Endothelial cell of umbilical vein (primary cell): ENCODE measurements at regions of chr20 and their contacts with region 1.

Region 1: DNA sequence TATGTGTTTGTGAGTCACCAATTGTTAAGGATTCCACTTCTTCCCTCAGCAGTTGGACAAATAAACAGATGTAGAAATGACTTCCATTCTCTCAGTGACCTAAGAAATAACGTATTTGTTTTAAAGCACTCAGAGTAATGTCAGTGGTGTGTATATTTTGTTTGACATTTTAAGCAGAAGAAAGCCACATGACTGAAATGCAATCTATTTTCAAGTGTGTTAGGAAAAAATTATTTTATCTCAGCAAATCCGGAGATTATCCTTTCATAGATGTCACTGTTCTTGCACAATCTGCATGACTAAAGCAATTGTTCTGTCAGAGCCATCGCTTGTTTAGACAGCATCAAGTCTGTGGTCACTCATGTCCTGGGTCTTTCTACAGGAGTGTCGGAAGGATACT is 77.1 kb downstream of the JAG1 start:
- DNase-seq: peak; percentile 55
- H3K4me3 ChIP-seq: no peak overlapping the region
- H3K27ac ChIP-seq: peak overlapping the region; percentile 25
- H3K4me1 ChIP-seq: peaks cover 35% of the 10 kb centered on the region
- H3K27me3 ChIP-seq: no peaks in the 10 kb centered on the region
- CTCF ChIP-seq: no peak
- POLR2A ChIP-seq: no peak

Region 2: DNA sequence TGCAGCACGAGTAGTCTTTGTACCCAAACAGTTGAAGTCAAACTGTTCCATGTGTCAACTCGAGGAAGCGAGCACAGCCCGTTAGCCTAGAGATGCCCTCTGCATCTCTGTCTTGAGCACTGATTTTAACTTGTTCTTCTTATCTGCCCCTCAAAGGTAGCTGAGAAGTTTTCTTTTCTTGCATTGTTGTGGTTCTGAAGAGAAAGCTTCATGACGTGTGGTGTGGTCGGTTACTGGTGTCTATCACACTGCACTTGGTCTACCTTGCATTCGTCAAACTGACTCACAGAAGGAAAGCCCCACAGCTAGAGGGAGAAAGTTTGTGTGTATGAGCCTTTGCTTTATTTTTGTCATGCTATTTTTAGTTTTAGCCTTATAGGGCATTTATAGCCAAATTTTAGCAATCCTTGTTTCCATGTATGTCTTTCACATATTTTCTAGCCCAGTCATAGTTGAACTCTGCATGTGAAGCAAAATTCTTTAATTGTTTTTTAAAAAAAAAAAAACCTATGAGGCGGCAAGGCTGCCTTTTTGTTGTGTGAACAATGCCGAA is 38.0 kb before region 1 on chr20:
- CTCF ChIA-PET with region 1: interaction called, 3 read pairs
- POLR2A ChIA-PET with region 1: interaction called, 5 read pairs
- dilution Hi-C with region 1: no loop called
- intact Hi-C with region 1: loop called (anchors 5 kb)
- DNase-seq: no peak
- H3K4me3 ChIP-seq: no peak overlapping the region
- H3K27ac ChIP-seq: no peak overlapping the region
- H3K4me1 ChIP-seq: peaks cover 19% of the 10 kb centered on the region
- H3K27me3 ChIP-seq: no peaks in the 10 kb centered on the region
- CTCF ChIP-seq: no peak
- POLR2A ChIP-seq: no peak

Region 3: GRCh38 chr20:10576411-10577090 is 20.2 kb before region 1 on chr20:
- CTCF ChIA-PET with region 1: interaction called, 11 read pairs
- POLR2A ChIA-PET with region 1: no interaction called
- dilution Hi-C with region 1: no loop called
- intact Hi-C with region 1: loop called (anchors 2 kb)
- DNase-seq: peak; percentile 55
- H3K4me3 ChIP-seq: no peak overlapping the region
- H3K27ac ChIP-seq: no peak overlapping the region
- H3K4me1 ChIP-seq: peaks cover 17% of the 10 kb centered on the region
- H3K27me3 ChIP-seq: no peaks in the 10 kb centered on the region
- CTCF ChIP-seq: no peak
- POLR2A ChIP-seq: no peak

Region 4: DNA sequence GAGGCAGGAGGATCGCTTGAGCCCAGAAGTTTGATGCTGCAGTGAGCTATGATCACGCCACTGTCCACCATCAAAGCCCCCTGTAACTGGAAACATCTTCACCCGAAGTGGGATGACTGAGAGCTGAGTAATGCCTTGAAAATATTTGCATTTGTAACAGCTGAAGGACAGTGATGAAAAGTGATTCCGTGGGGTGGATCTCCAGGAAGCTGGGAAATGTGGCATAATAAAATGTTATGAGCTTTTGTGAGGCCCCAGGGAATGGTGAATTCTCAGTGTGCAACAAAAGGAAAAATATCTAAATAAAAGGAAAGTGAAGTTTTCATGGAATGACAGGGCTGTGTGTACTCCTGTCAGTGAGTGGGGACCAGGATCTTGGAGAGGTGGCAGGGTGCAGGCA is 14.9 kb before region 1 on chr20:
- CTCF ChIA-PET with region 1: interaction called, 11 read pairs
- POLR2A ChIA-PET with region 1: no interaction called
- dilution Hi-C with region 1: no loop called
- intact Hi-C with region 1: loop called (anchors 2 kb)
- DNase-seq: no peak
- H3K4me3 ChIP-seq: no peak overlapping the region
- H3K27ac ChIP-seq: no peak overlapping the region
- H3K4me1 ChIP-seq: peaks cover 23% of the 10 kb centered on the region
- H3K27me3 ChIP-seq: no peaks in the 10 kb centered on the region
- CTCF ChIP-seq: no peak
- POLR2A ChIP-seq: no peak